CD4-positive, alpha-beta T cell (primary cell): ENCODE measurements at regions of chr9 and their contacts with region 1.

Region 1: GRCh38 chr9:21334701-21335632 is at the start of gene KLHL9:
- DNase-seq: peak; percentile 72 to 94 (median 83)
- ATAC-seq: peak; percentile 83
- H3K4me3 ChIP-seq: peak within 1 kb of the TSS; percentile 70
- H3K4me3 Mint-ChIP-seq: peak within 1 kb of the TSS; percentile 94
- H3K27ac ChIP-seq: peak within 1 kb of the TSS; percentile 89 to 94
- H3K27ac Mint-ChIP-seq: peak within 1 kb of the TSS; percentile 96
- H3K4me1 ChIP-seq: peaks cover 27% of the 10 kb centered on the region
- H3K4me1 Mint-ChIP-seq: peaks cover 68% of the 10 kb centered on the region
- H3K27me3 ChIP-seq: no peaks in the 10 kb centered on the region
- H3K27me3 Mint-ChIP-seq: no peaks in the 10 kb centered on the region
- CTCF ChIP-seq: no peak
- total RNA-seq, gene KLHL9: 11.9 to 12.0 TPM

Region 2: GRCh38 chr9:21348430-21348970 is 13.5 kb after region 1 on chr9:
- CTCF ChIA-PET with region 1: no interaction called
- POLR2A ChIA-PET with region 1: interaction called, 11 read pairs
- intact Hi-C with region 1: no loop called
- DNase-seq: no peak
- ATAC-seq: no peak
- H3K4me3 ChIP-seq: no peak overlapping the region
- H3K4me3 Mint-ChIP-seq: no peak overlapping the region
- H3K27ac ChIP-seq: no peak overlapping the region
- H3K27ac Mint-ChIP-seq: no peak overlapping the region
- H3K4me1 ChIP-seq: no peaks in the 10 kb centered on the region
- H3K4me1 Mint-ChIP-seq: no peaks in the 10 kb centered on the region
- H3K27me3 ChIP-seq: peaks cover 6% of the 10 kb centered on the region in 2 experiments
- H3K27me3 Mint-ChIP-seq: peaks cover 38% of the 10 kb centered on the region
- CTCF ChIP-seq: no peak

Region 3: GRCh38 chr9:21395778-21396717 is 61.1 kb after region 1 on chr9:
- CTCF ChIA-PET with region 1: interaction called, 27 read pairs
- POLR2A ChIA-PET with region 1: interaction called, 9 read pairs
- intact Hi-C with region 1: no loop called
- DNase-seq: peak; percentile 28 to 76 (median 51)
- ATAC-seq: peak; percentile 76
- H3K4me3 ChIP-seq: peak overlapping the region; percentile 39
- H3K4me3 Mint-ChIP-seq: peak overlapping the region; percentile 66
- H3K27ac ChIP-seq: no peak overlapping the region
- H3K27ac Mint-ChIP-seq: no peak overlapping the region
- H3K4me1 ChIP-seq: peaks cover 8% of the 10 kb centered on the region
- H3K4me1 Mint-ChIP-seq: peaks cover 9% of the 10 kb centered on the region
- H3K27me3 ChIP-seq: peaks cover 11 to 35% of the 10 kb centered on the region in 2 experiments
- H3K27me3 Mint-ChIP-seq: peaks cover 70% of the 10 kb centered on the region
- CTCF ChIP-seq: peak; percentile 95

Region 4: GRCh38 chr9:21455320-21455719 is 120.4 kb after region 1 on chr9:
- CTCF ChIA-PET with region 1: interaction called, 13 read pairs
- POLR2A ChIA-PET with region 1: no interaction called
- intact Hi-C with region 1: no loop called
- DNase-seq: peak in 6 of 14 experiments; percentile 2 to 69 (median 39)
- ATAC-seq: peak; percentile 89
- H3K4me3 ChIP-seq: no peak overlapping the region
- H3K4me3 Mint-ChIP-seq: no peak overlapping the region
- H3K27ac ChIP-seq: no peak overlapping the region
- H3K27ac Mint-ChIP-seq: no peak overlapping the region
- H3K4me1 ChIP-seq: no peaks in the 10 kb centered on the region
- H3K4me1 Mint-ChIP-seq: no peaks in the 10 kb centered on the region
- H3K27me3 ChIP-seq: no peaks in the 10 kb centered on the region
- H3K27me3 Mint-ChIP-seq: peaks cover 24% of the 10 kb centered on the region
- CTCF ChIP-seq: peak; percentile 56

Region 5: DNA sequence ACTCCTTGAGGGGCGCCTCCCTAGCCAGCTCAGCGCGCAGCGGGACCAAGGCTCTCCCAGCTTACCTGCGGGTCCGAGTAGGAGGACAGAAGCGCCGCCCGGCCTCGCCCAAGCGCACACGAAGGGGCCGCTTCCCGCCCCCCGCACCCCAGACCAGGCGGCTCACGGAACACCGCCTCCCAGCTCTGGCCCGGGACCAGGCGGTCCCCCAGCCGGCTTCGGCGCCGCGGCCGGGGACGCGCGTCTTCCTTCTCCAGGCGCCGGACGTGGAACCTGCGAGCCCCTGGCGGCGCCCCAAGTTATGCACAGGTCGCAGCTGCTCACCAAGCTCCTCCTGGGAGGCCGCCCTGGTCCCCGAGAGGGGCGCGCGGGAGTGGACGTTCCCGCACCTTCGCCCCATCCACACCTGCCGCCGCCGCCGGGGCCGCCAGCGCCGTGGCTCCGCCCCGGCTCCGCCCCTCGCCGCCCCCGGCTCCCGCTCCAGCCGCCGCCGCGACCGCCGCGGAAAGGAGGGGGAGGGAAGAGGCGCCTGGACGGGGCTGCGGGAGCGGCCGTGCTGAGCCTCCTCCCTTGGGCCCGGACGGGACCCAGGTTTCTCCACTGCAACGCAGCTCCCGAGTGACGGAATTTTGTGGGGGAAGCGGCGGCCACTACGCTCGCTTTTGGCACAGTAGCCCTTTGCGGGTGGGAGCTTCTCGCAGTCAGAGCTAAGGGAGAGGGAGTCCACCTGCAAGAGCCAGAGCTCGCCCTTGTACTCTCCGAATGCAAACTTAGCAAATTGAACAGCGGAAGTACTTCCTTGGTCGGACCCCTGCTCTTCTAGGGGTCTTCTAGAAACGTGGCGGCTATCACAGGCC is 224.7 kb after region 1 on chr9:
- CTCF ChIA-PET with region 1: interaction called, 3 read pairs
- POLR2A ChIA-PET with region 1: interaction called, 4 read pairs
- intact Hi-C with region 1: loop called in 1 of 2 experiments (anchors 10 kb)
- DNase-seq: peak; percentile 20 to 80 (median 41)
- ATAC-seq: peak; percentile 80
- H3K4me3 ChIP-seq: peak overlapping the region; percentile 61
- H3K4me3 Mint-ChIP-seq: peak overlapping the region; percentile 98
- H3K27ac ChIP-seq: no peak overlapping the region
- H3K27ac Mint-ChIP-seq: peak overlapping the region; percentile 68
- H3K4me1 ChIP-seq: peaks cover 16% of the 10 kb centered on the region
- H3K4me1 Mint-ChIP-seq: peaks cover 32% of the 10 kb centered on the region
- H3K27me3 ChIP-seq: peaks cover 7 to 45% of the 10 kb centered on the region in 2 experiments
- H3K27me3 Mint-ChIP-seq: peaks cover 46% of the 10 kb centered on the region
- CTCF ChIP-seq: no peak

Region 6: GRCh38 chr9:21709464-21710058 is 374.6 kb after region 1 on chr9:
- CTCF ChIA-PET with region 1: no interaction called
- POLR2A ChIA-PET with region 1: no interaction called
- intact Hi-C with region 1: loop called in 1 of 2 experiments (anchors 10 kb)
- DNase-seq: peak; percentile 15 to 77 (median 52)
- ATAC-seq: peak; percentile 72
- H3K4me3 ChIP-seq: no peak overlapping the region
- H3K4me3 Mint-ChIP-seq: no peak overlapping the region
- H3K27ac ChIP-seq: no peak overlapping the region
- H3K27ac Mint-ChIP-seq: no peak overlapping the region
- H3K4me1 ChIP-seq: peaks cover 4% of the 10 kb centered on the region
- H3K4me1 Mint-ChIP-seq: peaks cover 26% of the 10 kb centered on the region
- H3K27me3 ChIP-seq: no peaks in the 10 kb centered on the region
- H3K27me3 Mint-ChIP-seq: no peaks in the 10 kb centered on the region
- CTCF ChIP-seq: peak; percentile 95

Region 7: DNA sequence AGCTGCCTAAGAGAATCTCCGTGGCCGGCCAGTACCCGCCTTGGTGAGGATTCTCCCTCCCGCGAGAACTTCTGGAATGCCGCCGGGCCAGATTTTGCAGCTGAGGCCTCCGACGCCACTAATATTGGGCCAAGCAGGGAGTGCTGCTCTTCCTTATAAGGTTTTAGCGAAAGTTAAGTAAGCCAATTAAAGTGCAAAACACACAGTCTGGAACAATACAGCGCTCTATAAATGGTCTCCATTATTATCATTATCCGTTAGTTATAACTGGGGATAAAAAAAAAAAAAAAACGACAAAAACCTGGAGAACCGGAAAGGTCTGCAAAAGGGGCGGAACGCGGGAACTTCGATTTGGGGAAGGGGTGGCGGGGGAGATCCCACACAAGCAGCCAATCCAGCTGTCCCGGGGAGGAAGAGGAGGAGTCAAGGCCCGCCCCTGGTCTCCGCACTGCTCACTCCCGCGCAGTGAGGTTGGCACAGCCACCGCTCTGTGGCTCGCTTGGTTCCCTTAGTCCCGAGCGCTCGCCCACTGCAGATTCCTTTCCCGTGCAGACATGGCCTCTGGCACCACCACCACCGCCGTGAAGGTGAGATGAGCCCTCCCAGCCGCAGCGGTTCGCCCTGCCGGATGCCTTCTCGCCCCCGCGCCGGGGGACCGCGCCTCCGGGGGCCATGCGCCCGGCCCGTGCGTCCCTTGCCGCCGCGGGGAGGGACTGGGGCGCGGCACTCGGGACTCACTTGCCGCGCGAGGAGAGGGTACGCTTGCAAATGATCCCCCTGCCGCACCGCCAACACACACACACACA is 467.4 kb after region 1 on chr9 and contains the start of gene MTAP:
- CTCF ChIA-PET with region 1: interaction called, 3 read pairs
- POLR2A ChIA-PET with region 1: interaction called, 9 read pairs
- intact Hi-C with region 1: loop called in 1 of 2 experiments (anchors 5 kb)
- DNase-seq: peak; percentile 35 to 83 (median 57)
- ATAC-seq: peak; percentile 75
- H3K4me3 ChIP-seq: peak within 1 kb of the TSS; percentile 82
- H3K4me3 Mint-ChIP-seq: peak within 1 kb of the TSS; percentile 98
- H3K27ac ChIP-seq: peak within 1 kb of the TSS; percentile 16 to 55
- H3K27ac Mint-ChIP-seq: peak within 1 kb of the TSS; percentile 96
- H3K4me1 ChIP-seq: peaks cover 35% of the 10 kb centered on the region
- H3K4me1 Mint-ChIP-seq: peaks cover 47% of the 10 kb centered on the region
- H3K27me3 ChIP-seq: peaks cover 0 to 5% of the 10 kb centered on the region in 2 experiments
- H3K27me3 Mint-ChIP-seq: peaks cover 12% of the 10 kb centered on the region
- CTCF ChIP-seq: no peak
- total RNA-seq, gene MTAP: 17.2 to 17.8 TPM